H1 (cell line): ENCODE measurements at regions of chr10 and their contacts with region 1.

Region 1: GRCh38 chr10:84205049-84205852 is 10.9 kb downstream of the CDHR1 start:
- DNase-seq: peak in 1 of 2 experiments; percentile 89
- H3K4me3 ChIP-seq: no peak overlapping the region
- H3K27ac ChIP-seq: no peak overlapping the region
- H3K4me1 ChIP-seq: no peaks in the 10 kb centered on the region
- H3K27me3 ChIP-seq: no peaks in the 10 kb centered on the region
- CTCF ChIP-seq: peak; percentile 93 to 97 (median 93)
- EP300 ChIP-seq: no peak
- POLR2A ChIP-seq: no peak
- RAD21 ChIP-seq: peak; percentile 86 to 88

Region 2: DNA sequence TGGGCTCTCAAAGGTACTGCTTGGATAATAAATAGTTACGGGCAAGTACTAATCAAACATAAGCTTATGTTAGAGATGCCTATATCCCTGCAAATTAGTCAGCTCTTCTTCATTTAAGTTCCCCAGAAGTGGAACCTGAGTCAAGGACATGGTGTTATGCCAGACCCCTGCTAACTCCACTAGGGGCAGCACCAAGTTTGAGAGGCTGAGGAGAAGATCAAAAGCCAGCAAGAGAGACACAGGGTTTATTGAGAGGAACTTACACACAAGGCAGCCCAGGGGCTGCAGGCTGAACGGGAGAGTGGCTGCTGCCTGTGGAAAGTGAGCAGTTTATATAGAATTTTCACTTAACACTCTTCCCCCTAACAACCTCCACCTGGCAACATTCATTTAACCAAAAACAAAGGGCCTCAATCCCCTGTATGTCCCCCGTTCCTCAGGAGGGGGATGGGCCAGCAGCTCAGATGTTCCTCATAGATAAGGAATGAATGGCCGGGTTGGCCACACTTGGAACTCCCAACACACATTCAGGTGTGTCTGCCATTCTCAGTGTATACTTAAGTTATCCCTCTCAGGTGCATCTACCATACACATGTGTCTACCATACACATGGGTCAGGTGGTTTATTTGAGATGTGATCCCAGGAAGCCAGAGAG is 128.6 kb before region 1 on chr10:
- CTCF ChIA-PET with region 1: interaction called, 21 read pairs
- POLR2A ChIA-PET with region 1: no interaction called
- DNase-seq: no peak
- H3K4me3 ChIP-seq: no peak overlapping the region
- H3K27ac ChIP-seq: no peak overlapping the region
- H3K4me1 ChIP-seq: peaks cover 0 to 4% (median under 1%) of the 10 kb centered on the region in 4 experiments; a peak in 2 of 7 replicates
- H3K27me3 ChIP-seq: no peaks in the 10 kb centered on the region; a peak in 2 of 7 replicates
- CTCF ChIP-seq: peak; percentile 54 to 71 (median 54)
- EP300 ChIP-seq: no peak
- POLR2A ChIP-seq: no peak
- RAD21 ChIP-seq: peak in 1 of 2 experiments; percentile 29; a peak in 1 of 4 replicates

Region 3: DNA sequence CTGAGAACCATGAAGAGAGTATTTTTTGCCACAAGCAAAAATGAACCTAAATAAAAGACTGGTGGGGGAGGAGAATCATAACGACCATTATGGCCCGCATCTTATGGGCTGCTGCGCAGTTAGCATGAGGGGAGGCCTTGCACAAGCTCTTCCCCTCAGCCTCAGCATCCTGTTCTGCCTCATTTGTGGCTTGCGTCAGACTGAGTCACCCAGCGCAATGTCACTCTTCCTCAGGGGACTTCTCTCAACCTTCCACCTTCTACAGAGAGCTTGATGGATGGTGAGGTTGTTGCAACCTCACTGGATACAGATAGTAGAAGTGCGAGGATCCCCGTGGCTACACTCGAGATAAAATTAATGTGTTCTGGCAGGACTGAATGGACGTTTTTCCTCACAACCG is 48.5 kb before region 1 on chr10:
- CTCF ChIA-PET with region 1: interaction called, 38 read pairs
- POLR2A ChIA-PET with region 1: interaction called, 4 read pairs
- DNase-seq: no peak
- H3K4me3 ChIP-seq: no peak overlapping the region
- H3K27ac ChIP-seq: no peak overlapping the region
- H3K4me1 ChIP-seq: peaks cover 1 to 20% (median 10%) of the 10 kb centered on the region in 4 experiments; a peak in 6 of 7 replicates
- H3K27me3 ChIP-seq: no peaks in the 10 kb centered on the region
- CTCF ChIP-seq: no peak
- EP300 ChIP-seq: no peak
- POLR2A ChIP-seq: no peak
- RAD21 ChIP-seq: no peak

Region 4: GRCh38 chr10:84184528-84184927 is 20.7 kb before region 1 on chr10:
- CTCF ChIA-PET with region 1: interaction called, 17 read pairs
- POLR2A ChIA-PET with region 1: no interaction called
- DNase-seq: no peak
- H3K4me3 ChIP-seq: no peak overlapping the region
- H3K27ac ChIP-seq: no peak overlapping the region
- H3K4me1 ChIP-seq: no peaks in the 10 kb centered on the region
- H3K27me3 ChIP-seq: 0 out of 7 replicates have a peak, but pooled peaks cover 0 to 2% (median 0%) of the 10 kb centered on the region in 4 experiments
- CTCF ChIP-seq: no peak
- EP300 ChIP-seq: no peak
- POLR2A ChIP-seq: no peak
- RAD21 ChIP-seq: no peak

Region 5: GRCh38 chr10:84317174-84317573 is 111.9 kb after region 1 on chr10:
- CTCF ChIA-PET with region 1: no interaction called
- POLR2A ChIA-PET with region 1: no interaction called
- DNase-seq: no peak
- H3K4me3 ChIP-seq: no peak overlapping the region
- H3K27ac ChIP-seq: no peak overlapping the region
- H3K4me1 ChIP-seq: peaks cover 0 to 5% (median 3%) of the 10 kb centered on the region in 4 experiments; a peak in 3 of 7 replicates
- H3K27me3 ChIP-seq: no peaks in the 10 kb centered on the region
- CTCF ChIP-seq: no peak
- EP300 ChIP-seq: no peak
- POLR2A ChIP-seq: no peak
- RAD21 ChIP-seq: no peak